ENCODE measurements at regions of chr6 and their contacts with region 1.

Region 1: GRCh38 chr6:15458021-15458459 is 204.8 kb downstream of the DTNBP1 start:
- DNase-seq: no peak
- ATAC-seq: peak in 1 of 4 donors; percentile 15
- H3K4me3 ChIP-seq: peak overlapping the region in 5 of 12 donors; percentile 0 to 30 (median 10)
- H3K27ac ChIP-seq: peak overlapping the region in 1 of 12 donors; percentile 9
- H3K4me1 ChIP-seq: peaks cover 0 to 63% (median 32%) of the 10 kb centered on the region in 12 donors
- H3K27me3 ChIP-seq: no peaks in the 10 kb centered on the region
- CTCF ChIP-seq: no peak
- POLR2A ChIP-seq: no peak

Region 2: GRCh38 chr6:16956361-16956760 is 1498.3 kb after region 1 on chr6:
- intact Hi-C with region 1: loop called in 1 of 10 experiments (anchors 10 kb)
- DNase-seq: no peak
- ATAC-seq: no peak
- H3K4me3 ChIP-seq: no peak overlapping the region
- H3K27ac ChIP-seq: no peak overlapping the region
- H3K4me1 ChIP-seq: peaks cover 0 to 4% (median 0%) of the 10 kb centered on the region in 12 donors
- H3K27me3 ChIP-seq: peaks cover 0 to 6% (median 0%) of the 10 kb centered on the region in 9 donors
- CTCF ChIP-seq: no peak
- POLR2A ChIP-seq: no peak

Measured in heart left ventricle (tissue), 16 donors.